Activated CD8-positive, alpha-beta T cell treated with anti-CD3 and anti-CD28 coated beads, Interleukin-2, amount 10 ng/mL, durations not matched to agents 7 days and 5 days (primary cell): ENCODE measurements at regions of chr1 and their contacts with region 1.

Region 1: GRCh38 chr1:86704458-86704971 is at the start of gene SH3GLB1:
- DNase-seq: peak; percentile 91
- ATAC-seq: peak; percentile 95
- H3K4me3 Mint-ChIP-seq: peak within 1 kb of the TSS; percentile 99
- H3K27ac Mint-ChIP-seq: peak within 1 kb of the TSS; percentile 98
- H3K4me1 Mint-ChIP-seq: peaks cover 33% of the 10 kb centered on the region
- H3K27me3 Mint-ChIP-seq: no peaks in the 10 kb centered on the region
- total RNA-seq, gene SH3GLB1: 66.9 to 69.2 TPM

Region 2: DNA sequence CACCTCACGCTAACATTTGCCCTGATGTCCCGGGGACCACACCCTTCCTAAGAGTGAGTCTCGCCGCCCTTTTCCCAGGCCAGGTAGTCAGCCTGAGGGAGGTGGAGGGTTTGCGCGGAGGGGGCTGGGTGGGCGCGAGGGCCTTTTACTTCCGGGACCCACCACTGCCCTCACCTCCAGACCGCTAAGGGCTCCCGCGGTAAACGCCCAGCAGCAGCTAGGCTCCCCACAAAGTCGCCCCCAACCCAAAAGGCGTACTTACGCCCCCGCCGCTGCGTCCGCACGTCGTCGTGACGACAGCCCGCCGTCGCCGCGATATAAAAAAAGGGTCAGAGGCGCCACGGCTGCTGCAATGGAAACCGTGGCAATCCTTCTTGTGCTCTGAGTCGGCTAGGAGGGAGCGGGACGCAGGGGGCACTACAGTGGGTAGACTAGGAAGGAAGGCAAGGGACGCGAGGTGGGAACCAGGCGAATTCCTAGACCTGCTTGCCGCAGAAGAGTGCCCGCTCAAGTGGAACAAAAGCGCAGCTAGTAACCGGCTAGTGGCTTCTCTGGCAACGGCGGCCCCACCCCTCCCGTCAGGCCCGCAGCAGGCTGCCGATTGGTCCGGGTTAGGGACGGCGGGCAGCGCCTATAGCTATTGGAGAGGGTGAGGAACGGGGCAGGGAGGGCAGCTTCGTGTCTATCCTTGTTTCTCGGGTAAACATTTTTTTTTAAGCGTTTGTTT is 308.6 kb before region 1 on chr1 and contains the start of gene ODF2L:
- CTCF ChIA-PET with region 1: interaction called, 11 read pairs
- POLR2A ChIA-PET with region 1: interaction called, 5 read pairs
- DNase-seq: peak; percentile 94
- ATAC-seq: peak; percentile 100
- H3K4me3 Mint-ChIP-seq: peak within 1 kb of the TSS; percentile 95
- H3K27ac Mint-ChIP-seq: peak within 1 kb of the TSS; percentile 96
- H3K4me1 Mint-ChIP-seq: peaks cover 44% of the 10 kb centered on the region
- H3K27me3 Mint-ChIP-seq: no peaks in the 10 kb centered on the region
- total RNA-seq, gene ODF2L: 32.7 to 38.9 TPM

Region 3: DNA sequence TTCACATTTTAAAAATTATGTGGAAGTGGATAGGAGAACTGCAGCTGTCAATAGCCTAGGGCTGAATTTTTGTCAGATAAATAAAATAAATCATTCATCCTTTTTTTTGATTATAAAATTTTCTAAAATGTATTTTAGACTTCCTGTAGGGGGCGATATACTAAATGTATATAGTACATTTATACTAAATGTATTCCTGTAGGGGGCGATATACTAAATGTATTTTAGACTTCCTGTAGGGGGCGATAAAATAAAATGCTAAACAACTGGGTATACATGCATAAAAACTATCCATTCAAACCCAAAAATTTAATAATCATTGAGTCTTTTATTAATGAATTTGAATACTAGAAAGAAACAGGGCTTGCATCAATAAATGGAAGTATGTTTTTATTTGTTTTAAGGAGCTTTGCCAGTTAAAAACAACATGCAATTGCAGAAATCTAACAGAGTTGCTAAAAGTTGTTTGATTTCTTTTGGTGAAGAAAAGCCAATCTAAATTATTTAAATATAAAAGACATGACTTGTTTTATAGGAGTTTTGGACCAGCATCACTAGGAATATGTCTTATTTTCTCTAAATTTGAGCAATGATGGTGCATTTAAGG is 204.4 kb before region 1 on chr1:
- CTCF ChIA-PET with region 1: interaction called, 19 read pairs
- POLR2A ChIA-PET with region 1: no interaction called
- DNase-seq: no peak
- ATAC-seq: peak; percentile 48
- H3K4me3 Mint-ChIP-seq: no peak overlapping the region
- H3K27ac Mint-ChIP-seq: no peak overlapping the region
- H3K4me1 Mint-ChIP-seq: peaks cover 18% of the 10 kb centered on the region
- H3K27me3 Mint-ChIP-seq: peaks cover 20% of the 10 kb centered on the region

Region 4: GRCh38 chr1:86731416-86731815 is 26.9 kb after region 1 on chr1:
- CTCF ChIA-PET with region 1: interaction called, 22 read pairs
- POLR2A ChIA-PET with region 1: interaction called, 5 read pairs
- DNase-seq: no peak
- ATAC-seq: no peak
- H3K4me3 Mint-ChIP-seq: no peak overlapping the region
- H3K27ac Mint-ChIP-seq: no peak overlapping the region
- H3K4me1 Mint-ChIP-seq: no peaks in the 10 kb centered on the region
- H3K27me3 Mint-ChIP-seq: no peaks in the 10 kb centered on the region

Region 5: GRCh38 chr1:86741947-86742572 is 37.5 kb after region 1 on chr1:
- CTCF ChIA-PET with region 1: interaction called, 12 read pairs
- POLR2A ChIA-PET with region 1: interaction called, 8 read pairs
- DNase-seq: peak; percentile 41
- ATAC-seq: no peak
- H3K4me3 Mint-ChIP-seq: no peak overlapping the region
- H3K27ac Mint-ChIP-seq: no peak overlapping the region
- H3K4me1 Mint-ChIP-seq: peaks cover 4% of the 10 kb centered on the region
- H3K27me3 Mint-ChIP-seq: no peaks in the 10 kb centered on the region

Region 6: DNA sequence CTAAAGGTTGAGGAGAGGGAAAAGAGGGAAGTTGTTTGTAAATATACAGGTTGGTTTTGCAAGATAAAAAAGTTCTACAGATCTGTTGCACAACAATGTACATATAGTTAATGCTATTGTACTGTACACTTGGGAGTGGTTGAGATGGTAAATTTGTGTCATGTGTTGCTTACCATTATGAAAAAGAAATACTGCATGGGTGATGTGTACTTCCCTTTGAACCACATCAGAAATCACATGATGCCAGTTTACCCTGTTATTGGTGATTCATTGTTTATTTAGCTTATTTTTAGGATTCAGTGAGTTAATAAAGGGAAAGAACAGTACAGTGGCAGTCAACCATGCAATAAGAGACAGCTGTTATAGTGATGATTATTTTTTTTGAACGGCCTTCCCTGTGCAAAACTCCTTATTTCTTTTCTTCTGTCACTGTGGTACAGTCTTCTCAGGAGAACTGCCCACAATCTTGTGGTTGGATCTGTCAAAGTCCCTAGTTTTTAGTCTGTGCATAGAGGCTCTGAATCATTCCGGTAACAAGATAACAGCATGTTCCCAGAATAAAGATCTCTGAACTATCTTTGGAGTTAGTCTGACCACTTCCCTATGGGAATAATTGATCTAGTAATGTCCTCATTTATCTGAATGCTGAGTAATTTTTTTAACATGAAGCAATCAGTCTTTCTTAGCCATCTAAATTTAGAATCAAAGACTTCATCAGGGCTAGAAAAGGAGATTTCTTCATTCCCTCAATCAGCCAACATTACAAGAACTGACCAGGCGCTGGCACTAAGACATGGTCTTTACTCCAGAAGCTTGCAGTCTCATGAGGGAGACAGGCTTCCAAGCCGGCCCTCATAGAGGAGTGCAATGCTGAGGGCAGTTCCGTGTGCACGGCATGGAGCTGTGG is 84.0 kb after region 1 on chr1:
- CTCF ChIA-PET with region 1: no interaction called
- POLR2A ChIA-PET with region 1: no interaction called
- DNase-seq: no peak
- ATAC-seq: no peak
- H3K4me3 Mint-ChIP-seq: no peak overlapping the region
- H3K27ac Mint-ChIP-seq: no peak overlapping the region
- H3K4me1 Mint-ChIP-seq: no peaks in the 10 kb centered on the region
- H3K27me3 Mint-ChIP-seq: no peaks in the 10 kb centered on the region

Region 7: GRCh38 chr1:86913896-86914634 is 209.6 kb after region 1 on chr1 and contains the start of gene SELENOF:
- CTCF ChIA-PET with region 1: interaction called, 25 read pairs
- POLR2A ChIA-PET with region 1: interaction called, 40 read pairs
- DNase-seq: peak; percentile 99
- ATAC-seq: peak; percentile 91
- H3K4me3 Mint-ChIP-seq: no peak within 1 kb of the TSS
- H3K27ac Mint-ChIP-seq: no peak within 1 kb of the TSS
- H3K4me1 Mint-ChIP-seq: peaks cover 42% of the 10 kb centered on the region
- H3K27me3 Mint-ChIP-seq: no peaks in the 10 kb centered on the region
- total RNA-seq, gene SELENOF: 137 to 147 TPM

Region 8: DNA sequence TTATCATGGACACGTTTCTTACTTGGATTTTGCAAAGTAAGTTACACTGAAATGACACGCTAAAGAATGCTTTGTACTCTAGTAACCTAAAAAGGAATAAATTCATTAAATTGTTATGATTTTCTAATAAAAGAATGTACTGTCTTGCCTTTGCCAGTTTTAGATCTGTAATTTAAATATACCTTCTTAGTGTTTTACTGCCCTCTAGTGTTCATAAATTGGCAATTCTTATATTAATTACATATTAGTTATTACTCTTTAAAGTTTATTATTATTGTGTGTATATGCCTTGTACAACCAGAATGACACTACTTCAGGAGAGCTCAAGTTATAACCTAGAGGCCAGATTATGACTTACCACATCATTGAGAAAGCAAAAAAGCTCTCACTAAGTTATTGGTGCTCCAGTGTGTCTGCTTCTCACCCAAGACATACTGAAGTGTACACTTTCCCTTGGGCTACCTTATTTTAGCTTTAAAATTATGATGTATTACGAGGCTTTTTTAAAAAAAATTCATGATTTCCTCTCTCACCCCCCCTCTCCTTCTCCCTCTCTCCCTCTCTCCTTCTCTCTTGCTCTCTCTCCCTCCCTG is 379.8 kb after region 1 on chr1:
- CTCF ChIA-PET with region 1: interaction called, 15 read pairs
- POLR2A ChIA-PET with region 1: no interaction called
- DNase-seq: no peak
- ATAC-seq: no peak
- H3K4me3 Mint-ChIP-seq: no peak overlapping the region
- H3K27ac Mint-ChIP-seq: no peak overlapping the region
- H3K4me1 Mint-ChIP-seq: peaks cover 7% of the 10 kb centered on the region
- H3K27me3 Mint-ChIP-seq: no peaks in the 10 kb centered on the region